Ovary (tissue), 10 donors: ENCODE measurements at regions of chrX and their contacts with region 1.

Region 1: DNA sequence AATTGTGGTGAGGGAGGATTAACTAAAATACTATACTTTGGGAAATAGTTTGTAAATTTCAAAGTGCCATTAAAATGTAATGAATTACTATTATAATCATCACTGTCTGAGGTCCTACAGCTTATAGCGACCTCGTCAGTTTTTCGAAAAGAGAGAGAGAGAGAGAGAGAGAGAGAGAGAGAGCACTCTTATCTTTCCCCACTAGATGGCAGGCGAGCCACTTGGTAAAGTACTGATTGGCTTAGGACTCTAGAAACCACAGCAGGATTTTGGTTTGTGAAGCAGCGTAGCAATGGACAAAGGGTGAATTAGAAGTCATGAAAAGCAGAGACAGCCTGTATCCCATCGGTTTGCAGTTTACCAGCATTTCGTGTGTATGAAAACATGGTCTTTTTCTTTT is 52.5 kb downstream of the LINC00632 start:
- DNase-seq: peak in 2 of 5 donors; percentile 23 to 32
- H3K4me3 ChIP-seq: no peak overlapping the region
- H3K27ac ChIP-seq: no peak overlapping the region
- H3K4me1 ChIP-seq: no peaks in the 10 kb centered on the region
- H3K27me3 ChIP-seq: no peaks in the 10 kb centered on the region
- CTCF ChIP-seq: peak in 2 of 3 donors; percentile 26
- EP300 ChIP-seq: no peak
- POLR2A ChIP-seq: no peak

Region 2: DNA sequence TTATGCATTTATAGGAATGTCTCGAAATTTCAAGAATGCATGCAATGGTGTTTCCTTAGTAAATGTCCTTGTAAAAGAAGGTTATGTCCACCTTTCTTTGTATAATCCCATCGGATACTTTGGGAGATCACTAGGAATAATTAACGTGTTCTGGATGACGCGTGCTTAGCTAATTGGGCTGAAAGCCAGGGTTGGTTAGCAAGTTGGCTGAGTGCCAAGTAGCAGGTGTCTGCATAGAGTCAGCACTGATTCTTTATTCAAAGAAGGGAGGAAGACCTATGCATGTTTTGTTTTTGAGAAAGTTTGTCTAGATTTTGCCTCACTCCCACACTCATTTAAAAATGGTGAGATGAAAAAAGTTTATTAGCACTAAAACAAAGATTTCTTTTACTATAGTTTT is 401.8 kb before region 1 on chrX:
- intact Hi-C with region 1: no loop called
- DNase-seq: no peak
- H3K4me3 ChIP-seq: no peak overlapping the region
- H3K27ac ChIP-seq: no peak overlapping the region
- H3K4me1 ChIP-seq: no peaks in the 10 kb centered on the region
- H3K27me3 ChIP-seq: no peaks in the 10 kb centered on the region
- CTCF ChIP-seq: no peak
- EP300 ChIP-seq: no peak
- POLR2A ChIP-seq: no peak

Region 3: DNA sequence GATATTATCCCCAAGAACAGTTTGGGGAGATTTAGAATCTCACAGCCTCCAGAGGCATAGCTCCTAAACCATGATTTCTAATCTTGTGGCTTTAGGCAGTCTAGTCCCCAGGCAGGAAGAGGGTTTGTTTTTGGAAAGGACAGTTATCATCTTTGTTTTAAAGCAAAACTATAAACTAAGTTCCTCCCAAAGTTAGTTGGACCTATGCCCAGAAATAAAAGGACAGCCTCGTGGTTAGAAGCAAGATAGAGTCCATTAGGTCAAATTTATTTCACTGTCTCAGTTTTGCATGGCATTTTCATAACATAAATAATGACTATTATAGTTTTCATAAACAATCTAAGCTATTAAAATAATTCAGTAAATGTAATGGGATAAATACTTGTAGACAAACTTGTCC is 1322.6 kb after region 1 on chrX:
- intact Hi-C with region 1: loop called in 1 of 4 experiments (anchors 5 kb)
- DNase-seq: no peak
- H3K4me3 ChIP-seq: no peak overlapping the region
- H3K27ac ChIP-seq: no peak overlapping the region
- H3K4me1 ChIP-seq: no peaks in the 10 kb centered on the region
- H3K27me3 ChIP-seq: no peaks in the 10 kb centered on the region
- CTCF ChIP-seq: no peak
- EP300 ChIP-seq: no peak
- POLR2A ChIP-seq: no peak